ENCODE measurements at regions of chr5 and their contacts with region 1.

Region 1: GRCh38 chr5:57298295-57298984 is 124.6 kb downstream of the GPBP1 start:
- DNase-seq: peak; percentile 55 to 81 (median 62)
- ATAC-seq: peak; percentile 94
- H3K4me3 ChIP-seq: no peak overlapping the region
- H3K27ac ChIP-seq: no peak overlapping the region
- H3K4me1 ChIP-seq: no peaks in the 10 kb centered on the region
- H3K27me3 ChIP-seq: no peaks in the 10 kb centered on the region
- CTCF ChIP-seq: peak; percentile 68 to 83 (median 82)
- EP300 ChIP-seq: no peak
- POLR2A ChIP-seq: no peak
- RAD21 ChIP-seq: peak; percentile 80 to 86

Region 2: DNA sequence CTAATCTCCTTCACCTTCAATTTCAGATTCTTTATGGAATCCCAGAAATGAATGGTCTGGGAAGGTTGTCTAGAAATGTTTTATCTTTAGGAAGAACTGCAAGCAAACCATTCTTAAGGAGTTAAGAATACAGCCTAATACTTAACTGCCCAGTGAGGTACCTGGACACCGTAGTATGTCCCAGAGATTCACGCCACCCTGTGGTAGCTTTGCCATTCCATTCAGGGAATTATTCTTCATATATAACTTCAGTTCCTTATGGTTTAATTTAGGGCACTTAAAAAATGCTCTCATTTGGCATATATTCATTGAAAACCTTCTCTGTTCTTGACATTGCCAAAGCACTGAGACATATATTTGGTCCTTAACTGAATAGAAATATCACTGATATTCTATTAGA is 134.4 kb after region 1 on chr5:
- CTCF ChIA-PET with region 1: interaction called, 9 read pairs
- POLR2A ChIA-PET with region 1: no interaction called
- in situ Hi-C with region 1: no loop called
- intact Hi-C with region 1: loop called (anchors 1 kb)
- DNase-seq: peak in 3 of 4 experiments; percentile 13 to 41 (median 17)
- ATAC-seq: peak; percentile 87
- H3K4me3 ChIP-seq: no peak overlapping the region
- H3K27ac ChIP-seq: no peak overlapping the region
- H3K4me1 ChIP-seq: no peaks in the 10 kb centered on the region
- H3K27me3 ChIP-seq: peaks cover 0 to 10% of the 10 kb centered on the region in 2 experiments; a peak in 1 of 5 replicates
- CTCF ChIP-seq: peak; percentile 41 to 66 (median 53); a peak in 5 of 6 replicates
- EP300 ChIP-seq: no peak
- POLR2A ChIP-seq: no peak
- RAD21 ChIP-seq: peak; percentile 61 to 75

Region 3: GRCh38 chr5:57499262-57500050 is 201.0 kb after region 1 on chr5:
- CTCF ChIA-PET with region 1: interaction called, 6 read pairs
- POLR2A ChIA-PET with region 1: no interaction called
- in situ Hi-C with region 1: no loop called
- intact Hi-C with region 1: loop called (anchors 2 kb)
- DNase-seq: peak; percentile 39 to 47 (median 44)
- ATAC-seq: peak; percentile 79
- H3K4me3 ChIP-seq: no peak overlapping the region
- H3K27ac ChIP-seq: no peak overlapping the region
- H3K4me1 ChIP-seq: peaks cover 0 to 8% of the 10 kb centered on the region in 2 experiments; a peak in 4 of 5 replicates
- H3K27me3 ChIP-seq: no peaks in the 10 kb centered on the region
- CTCF ChIP-seq: peak; percentile 44 to 72 (median 66)
- EP300 ChIP-seq: no peak
- POLR2A ChIP-seq: no peak
- RAD21 ChIP-seq: peak; percentile 72 to 75

Region 4: GRCh38 chr5:57779383-57780223 is 481.2 kb after region 1 on chr5:
- CTCF ChIA-PET with region 1: no interaction called
- POLR2A ChIA-PET with region 1: no interaction called
- in situ Hi-C with region 1: no loop called
- intact Hi-C with region 1: loop called (anchors 5 kb)
- DNase-seq: peak in 3 of 4 experiments; percentile 10 to 48 (median 11)
- ATAC-seq: peak; percentile 73
- H3K4me3 ChIP-seq: no peak overlapping the region
- H3K27ac ChIP-seq: no peak overlapping the region
- H3K4me1 ChIP-seq: no peaks in the 10 kb centered on the region
- H3K27me3 ChIP-seq: no peaks in the 10 kb centered on the region
- CTCF ChIP-seq: peak; percentile 44 to 61 (median 51); a peak in 5 of 6 replicates
- EP300 ChIP-seq: no peak
- POLR2A ChIP-seq: no peak
- RAD21 ChIP-seq: peak; percentile 64 to 75

Region 5: GRCh38 chr5:58849921-58850667 is 1551.7 kb after region 1 on chr5:
- CTCF ChIA-PET with region 1: no interaction called
- POLR2A ChIA-PET with region 1: no interaction called
- in situ Hi-C with region 1: loop called (anchors 25 kb)
- intact Hi-C with region 1: no loop called
- DNase-seq: peak in 2 of 4 experiments; percentile 10 to 20
- ATAC-seq: peak; percentile 66
- H3K4me3 ChIP-seq: no peak overlapping the region
- H3K27ac ChIP-seq: no peak overlapping the region
- H3K4me1 ChIP-seq: no peaks in the 10 kb centered on the region
- H3K27me3 ChIP-seq: no peaks in the 10 kb centered on the region
- CTCF ChIP-seq: peak in 2 of 3 experiments; percentile 31 to 42; a peak in 3 of 6 replicates
- EP300 ChIP-seq: no peak
- POLR2A ChIP-seq: no peak
- RAD21 ChIP-seq: peak; percentile 41 to 60

Measured in K562 (cell line).